CD14-positive monocyte (primary cell): ENCODE measurements at regions of chr2 and their contacts with region 1.

Region 1: DNA sequence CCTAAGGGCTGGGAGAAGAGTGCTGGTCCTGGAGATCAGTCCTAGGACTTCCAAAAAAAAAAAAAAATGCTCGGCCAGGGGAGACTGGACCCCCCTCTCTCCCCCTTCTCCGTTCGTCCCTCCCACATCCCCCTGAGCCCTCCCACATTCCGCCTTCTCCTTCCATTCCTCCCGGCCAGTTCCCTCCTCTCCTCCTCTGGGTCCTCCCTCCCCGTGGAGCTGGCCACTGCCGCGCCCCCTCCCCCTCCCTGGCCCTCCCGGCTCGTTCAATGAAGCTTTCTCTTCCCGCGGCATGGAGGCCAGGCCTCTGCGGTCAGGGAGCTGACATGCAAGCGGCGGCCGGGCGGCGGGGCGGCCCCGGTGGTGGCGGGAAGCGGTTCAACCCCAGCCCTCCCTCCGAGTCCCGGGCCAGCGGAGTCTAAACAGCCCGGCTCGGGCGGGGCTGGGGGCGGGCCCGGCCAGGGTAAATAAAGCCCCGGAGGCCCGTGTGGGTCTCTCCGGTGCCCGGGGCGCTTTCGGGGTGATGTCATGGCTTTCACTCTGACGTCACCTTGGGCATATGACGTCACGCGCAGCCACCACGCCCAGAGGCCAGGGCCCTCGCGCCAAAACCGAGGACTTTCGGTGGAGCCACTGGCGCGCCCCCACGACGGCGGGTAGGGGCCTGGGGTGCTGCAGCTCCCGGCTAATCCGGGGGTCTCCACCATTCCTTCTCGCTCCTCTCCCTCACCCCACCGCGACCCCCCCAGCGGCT is at the start of gene LOXL3:
- DNase-seq: peak; percentile 58 to 82 (median 82)
- H3K4me3 ChIP-seq: peak within 1 kb of the TSS; percentile 94 to 99 (median 98)
- H3K4me3 Mint-ChIP-seq: peak within 1 kb of the TSS; percentile 98 to 99
- H3K27ac ChIP-seq: peak within 1 kb of the TSS; percentile 82 to 94
- H3K27ac Mint-ChIP-seq: peak within 1 kb of the TSS; percentile 91 to 98 (median 96)
- H3K4me1 ChIP-seq: peaks cover 33 to 51% of the 10 kb centered on the region in 2 donors
- H3K4me1 Mint-ChIP-seq: peaks cover 48% of the 10 kb centered on the region
- H3K27me3 ChIP-seq: no peaks in the 10 kb centered on the region
- H3K27me3 Mint-ChIP-seq: peaks cover 2 to 5% (median 2%) of the 10 kb centered on the region in 3 donors
- CTCF ChIP-seq: no peak
- polyA plus RNA-seq, gene LOXL3: 18.2 to 35.0 (median 18.5) TPM

Region 2: DNA sequence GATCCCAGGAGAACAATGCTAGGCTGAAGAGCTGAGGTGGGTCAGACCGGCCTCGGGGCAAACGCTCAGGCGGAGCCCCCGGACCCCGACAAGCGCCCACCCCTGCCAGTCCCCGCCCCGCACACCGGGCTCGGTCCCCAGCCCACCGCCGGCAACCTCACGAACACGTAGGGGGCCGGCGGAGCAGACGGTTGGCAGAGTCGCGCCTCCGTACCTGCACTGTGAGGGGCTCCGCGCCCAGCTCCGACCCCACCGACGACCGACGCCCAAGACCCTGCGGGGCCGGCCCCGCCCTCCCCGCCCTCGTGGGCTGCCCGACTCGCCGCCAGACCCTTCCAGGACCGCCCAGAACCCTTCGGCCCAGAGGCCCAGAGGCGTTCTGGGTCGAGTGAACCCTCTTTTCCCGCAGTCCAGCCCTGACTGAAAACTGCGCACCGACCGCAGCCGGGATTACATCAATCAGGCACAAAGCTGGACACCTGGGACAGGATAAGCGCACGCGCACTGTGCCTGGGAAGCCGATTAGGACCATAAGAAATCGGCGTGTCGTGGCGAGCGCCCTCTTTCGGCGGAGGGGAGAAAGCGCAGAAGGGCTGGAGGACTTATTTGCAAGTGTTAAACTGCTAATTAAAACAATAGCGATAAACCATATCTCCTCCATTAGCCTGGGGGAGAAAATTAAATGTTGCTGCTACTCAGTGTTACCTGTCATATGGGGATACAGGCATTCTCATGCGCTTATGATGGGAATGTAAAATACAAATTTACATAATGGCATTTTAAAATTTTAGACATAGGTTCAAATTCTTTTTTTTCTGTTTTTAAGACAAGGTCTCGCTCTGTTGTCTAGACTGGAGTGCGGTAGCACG is 162.3 kb before region 1 on chr2:
- intact Hi-C with region 1: loop called in 1 of 2 experiments (anchors 10 kb)
- DNase-seq: peak; percentile 92 to 93 (median 93)
- H3K4me3 ChIP-seq: peak overlapping the region; percentile 70 to 87 (median 74)
- H3K4me3 Mint-ChIP-seq: peak overlapping the region; percentile 93 to 95
- H3K27ac ChIP-seq: peak overlapping the region; percentile 51 to 93
- H3K27ac Mint-ChIP-seq: peak overlapping the region; percentile 96 to 100 (median 99)
- H3K4me1 ChIP-seq: peaks cover 9 to 16% of the 10 kb centered on the region in 2 donors
- H3K4me1 Mint-ChIP-seq: peaks cover 8% of the 10 kb centered on the region
- H3K27me3 ChIP-seq: no peaks in the 10 kb centered on the region
- H3K27me3 Mint-ChIP-seq: no peaks in the 10 kb centered on the region
- CTCF ChIP-seq: peak; percentile 96

Region 3: GRCh38 chr2:74587664-74588277 is 33.7 kb after region 1 on chr2:
- intact Hi-C with region 1: loop called (anchors 5 kb)
- DNase-seq: peak; percentile 65 to 69 (median 69)
- H3K4me3 ChIP-seq: no peak overlapping the region
- H3K4me3 Mint-ChIP-seq: no peak overlapping the region
- H3K27ac ChIP-seq: no peak overlapping the region
- H3K27ac Mint-ChIP-seq: peak overlapping the region in 2 of 7 donors; percentile 46 to 69
- H3K4me1 ChIP-seq: peaks cover 31 to 37% of the 10 kb centered on the region in 2 donors
- H3K4me1 Mint-ChIP-seq: peaks cover 39% of the 10 kb centered on the region
- H3K27me3 ChIP-seq: no peaks in the 10 kb centered on the region
- H3K27me3 Mint-ChIP-seq: peaks cover 0 to under 1% (median 0%) of the 10 kb centered on the region in 3 donors
- CTCF ChIP-seq: peak; percentile 83